ENCODE measurements at regions of chr17 and their contacts with region 1.

Region 1: DNA sequence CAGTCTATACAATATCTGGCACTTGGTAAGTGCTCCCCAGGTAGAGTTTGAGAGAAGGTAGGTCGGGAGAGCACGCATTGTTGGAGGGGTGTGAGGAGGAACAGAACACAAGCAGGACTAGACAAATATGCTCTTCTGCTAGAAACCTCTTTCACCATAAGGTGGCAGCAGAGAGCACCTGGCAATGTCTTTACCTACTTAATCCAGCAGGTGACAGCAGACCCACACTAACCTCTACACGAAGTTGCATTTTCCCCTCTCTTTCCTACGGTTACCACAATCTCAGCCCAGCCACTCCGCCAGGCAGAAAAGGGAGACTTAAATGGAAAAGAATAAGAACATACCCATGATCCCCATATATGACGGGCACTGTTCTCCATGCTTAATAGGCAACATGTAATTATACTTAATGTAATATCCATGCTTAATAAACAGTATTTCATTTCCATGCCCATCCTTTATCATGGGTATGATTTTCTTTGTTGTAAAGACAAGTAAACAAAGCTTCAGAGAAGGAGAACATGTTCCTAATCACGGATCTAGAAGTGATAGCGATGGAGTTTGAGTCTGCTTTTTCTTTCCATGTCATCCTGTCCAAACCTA is 55.1 kb upstream of the CCL2 start:
- DNase-seq: peak; percentile 61
- H3K4me3 Mint-ChIP-seq: no peak overlapping the region
- H3K27ac Mint-ChIP-seq: no peak overlapping the region
- H3K4me1 Mint-ChIP-seq: peaks cover 21% of the 10 kb centered on the region
- H3K27me3 Mint-ChIP-seq: peaks cover 40% of the 10 kb centered on the region

Region 2: GRCh38 chr17:34306466-34306865 is 106.4 kb after region 1 on chr17:
- intact Hi-C with region 1: loop called (anchors 2 kb)
- DNase-seq: no peak
- H3K4me3 Mint-ChIP-seq: no peak overlapping the region
- H3K27ac Mint-ChIP-seq: no peak overlapping the region
- H3K4me1 Mint-ChIP-seq: peaks cover 8% of the 10 kb centered on the region
- H3K27me3 Mint-ChIP-seq: peaks cover 25% of the 10 kb centered on the region

Region 3: GRCh38 chr17:34378664-34379101 is 178.7 kb after region 1 on chr17:
- intact Hi-C with region 1: loop called (anchors 1 kb)
- DNase-seq: peak; percentile 26
- H3K4me3 Mint-ChIP-seq: peak overlapping the region; percentile 59
- H3K27ac Mint-ChIP-seq: peak overlapping the region; percentile 84
- H3K4me1 Mint-ChIP-seq: peaks cover 72% of the 10 kb centered on the region
- H3K27me3 Mint-ChIP-seq: no peaks in the 10 kb centered on the region

Region 4: GRCh38 chr17:34852614-34853013 is 652.6 kb after region 1 on chr17:
- intact Hi-C with region 1: loop called (anchors 10 kb)
- DNase-seq: no peak
- H3K4me3 Mint-ChIP-seq: no peak overlapping the region
- H3K27ac Mint-ChIP-seq: no peak overlapping the region
- H3K4me1 Mint-ChIP-seq: no peaks in the 10 kb centered on the region
- H3K27me3 Mint-ChIP-seq: peaks cover 12% of the 10 kb centered on the region